ENCODE measurements at regions of chr2 and their contacts with region 1.

Region 1: DNA sequence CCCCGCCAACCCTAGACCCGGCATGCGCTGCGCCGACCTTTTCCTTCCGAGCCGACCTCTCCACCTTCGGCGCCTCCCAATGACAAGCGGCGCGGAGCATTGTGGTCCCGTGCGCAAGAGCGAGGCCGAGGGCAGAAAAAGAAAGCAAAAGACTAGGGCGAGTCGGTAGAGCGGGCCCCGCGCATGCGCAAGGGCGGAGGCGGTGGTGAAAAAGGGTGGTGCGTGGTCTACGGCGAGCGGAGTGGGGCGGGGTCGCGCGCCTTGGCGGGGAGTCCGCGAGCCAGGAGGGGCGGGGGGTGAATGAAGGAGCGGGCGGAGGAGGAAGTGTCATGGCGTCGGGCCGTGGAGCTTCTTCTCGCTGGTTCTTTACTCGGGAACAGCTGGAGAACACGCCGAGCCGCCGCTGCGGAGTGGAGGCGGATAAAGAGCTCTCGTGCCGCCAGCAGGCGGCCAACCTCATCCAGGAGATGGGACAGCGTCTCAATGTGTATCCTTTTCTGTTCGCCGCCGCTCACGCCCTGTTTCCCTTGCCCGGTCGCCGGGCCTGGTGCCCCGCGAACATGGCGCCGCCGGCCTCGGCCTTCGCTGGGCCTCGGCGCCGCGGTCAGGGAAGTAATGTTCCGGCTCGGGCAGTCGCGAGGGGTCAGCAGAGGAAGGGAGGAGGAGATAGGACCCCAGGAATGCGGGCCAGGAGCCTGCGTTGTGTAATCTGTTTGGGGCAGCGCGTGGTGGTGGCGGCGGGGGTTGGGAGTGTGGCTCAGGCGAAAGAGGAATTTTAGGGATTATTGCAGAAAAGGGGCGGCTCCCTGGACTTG is at the start of gene CCNT2:
- DNase-seq: peak; percentile 99
- H3K4me3 Mint-ChIP-seq: peak within 1 kb of the TSS; percentile 95
- H3K27ac Mint-ChIP-seq: peak within 1 kb of the TSS; percentile 98
- H3K4me1 Mint-ChIP-seq: peaks cover 24% of the 10 kb centered on the region
- H3K27me3 Mint-ChIP-seq: no peaks in the 10 kb centered on the region
- total RNA-seq, gene CCNT2: 31.9 to 33.2 TPM

Region 2: GRCh38 chr2:134178241-134178877 is 740.4 kb before region 1 on chr2:
- CTCF ChIA-PET with region 1: no interaction called
- intact Hi-C with region 1: loop called (anchors 5 kb)
- DNase-seq: no peak
- H3K4me3 Mint-ChIP-seq: no peak overlapping the region
- H3K27ac Mint-ChIP-seq: no peak overlapping the region
- H3K4me1 Mint-ChIP-seq: peaks cover 65% of the 10 kb centered on the region
- H3K27me3 Mint-ChIP-seq: no peaks in the 10 kb centered on the region

Region 3: GRCh38 chr2:134668821-134669220 is 249.9 kb before region 1 on chr2:
- CTCF ChIA-PET with region 1: interaction called, 3 read pairs
- intact Hi-C with region 1: loop called (anchors 2 kb)
- DNase-seq: peak; percentile 95
- H3K4me3 Mint-ChIP-seq: no peak overlapping the region
- H3K27ac Mint-ChIP-seq: no peak overlapping the region
- H3K4me1 Mint-ChIP-seq: peaks cover 63% of the 10 kb centered on the region
- H3K27me3 Mint-ChIP-seq: peaks cover 29% of the 10 kb centered on the region

Region 4: GRCh38 chr2:134799936-134800335 is 118.8 kb before region 1 on chr2:
- CTCF ChIA-PET with region 1: no interaction called
- intact Hi-C with region 1: no loop called
- DNase-seq: no peak
- H3K4me3 Mint-ChIP-seq: no peak overlapping the region
- H3K27ac Mint-ChIP-seq: no peak overlapping the region
- H3K4me1 Mint-ChIP-seq: no peaks in the 10 kb centered on the region
- H3K27me3 Mint-ChIP-seq: no peaks in the 10 kb centered on the region

Region 5: GRCh38 chr2:135245055-135245454 is 326.3 kb after region 1 on chr2:
- CTCF ChIA-PET with region 1: no interaction called
- intact Hi-C with region 1: loop called (anchors 1 kb)
- DNase-seq: peak; percentile 45
- H3K4me3 Mint-ChIP-seq: no peak overlapping the region
- H3K27ac Mint-ChIP-seq: peak overlapping the region; percentile 84
- H3K4me1 Mint-ChIP-seq: peaks cover 12% of the 10 kb centered on the region
- H3K27me3 Mint-ChIP-seq: no peaks in the 10 kb centered on the region

Region 6: DNA sequence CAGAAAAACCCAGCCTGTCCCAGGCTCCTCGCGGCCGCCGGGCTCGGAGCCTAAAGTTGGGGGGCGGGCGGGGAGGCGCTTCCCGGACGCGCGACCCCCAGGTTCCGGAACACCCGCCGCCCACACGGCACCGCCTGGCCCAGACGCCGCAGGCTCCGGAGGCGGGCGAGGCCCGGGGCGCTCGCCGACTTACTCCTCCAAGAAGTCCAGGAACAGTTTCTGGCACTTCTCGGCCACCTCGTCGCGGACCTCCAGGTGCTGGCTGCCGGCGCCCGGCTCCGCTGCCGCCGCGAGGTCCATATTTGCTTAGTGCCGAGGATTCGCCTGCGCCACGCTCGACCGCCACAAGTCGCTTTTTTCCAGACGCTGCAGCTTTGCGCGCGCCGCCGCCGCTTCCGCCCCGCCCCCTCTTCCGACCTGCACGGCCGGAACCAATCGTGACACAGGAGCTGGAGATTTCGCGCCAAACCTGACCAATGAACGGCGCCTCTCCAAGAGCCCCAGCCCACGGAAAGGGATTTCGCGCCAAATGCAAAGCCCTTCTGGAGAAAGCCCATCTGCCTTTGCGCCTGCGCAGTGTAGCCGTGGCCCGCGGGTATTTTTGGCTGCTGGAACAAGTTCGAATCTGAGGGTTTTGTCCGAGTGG is 957.5 kb after region 1 on chr2 and contains the start of gene MCM6:
- CTCF ChIA-PET with region 1: no interaction called
- intact Hi-C with region 1: loop called (anchors 1 kb)
- DNase-seq: peak; percentile 100
- H3K4me3 Mint-ChIP-seq: peak within 1 kb of the TSS; percentile 91
- H3K27ac Mint-ChIP-seq: peak within 1 kb of the TSS; percentile 99
- H3K4me1 Mint-ChIP-seq: peaks cover 39% of the 10 kb centered on the region
- H3K27me3 Mint-ChIP-seq: no peaks in the 10 kb centered on the region
- total RNA-seq, gene MCM6: 221 to 226 TPM